CD4-positive, alpha-beta T cell (primary cell): ENCODE measurements at regions of chr4 and their contacts with region 1.

Region 1: GRCh38 chr4:54683616-54684346 is 26.0 kb downstream of the KIT start:
- DNase-seq: peak; percentile 19 to 72 (median 47)
- ATAC-seq: peak; percentile 76
- H3K4me3 ChIP-seq: no peak overlapping the region
- H3K4me3 Mint-ChIP-seq: peak overlapping the region; percentile 69
- H3K27ac ChIP-seq: no peak overlapping the region
- H3K27ac Mint-ChIP-seq: peak overlapping the region; percentile 45
- H3K4me1 ChIP-seq: peaks cover 20% of the 10 kb centered on the region
- H3K4me1 Mint-ChIP-seq: peaks cover 29% of the 10 kb centered on the region
- H3K27me3 ChIP-seq: no peaks in the 10 kb centered on the region
- H3K27me3 Mint-ChIP-seq: no peaks in the 10 kb centered on the region
- CTCF ChIP-seq: peak; percentile 58

Region 2: DNA sequence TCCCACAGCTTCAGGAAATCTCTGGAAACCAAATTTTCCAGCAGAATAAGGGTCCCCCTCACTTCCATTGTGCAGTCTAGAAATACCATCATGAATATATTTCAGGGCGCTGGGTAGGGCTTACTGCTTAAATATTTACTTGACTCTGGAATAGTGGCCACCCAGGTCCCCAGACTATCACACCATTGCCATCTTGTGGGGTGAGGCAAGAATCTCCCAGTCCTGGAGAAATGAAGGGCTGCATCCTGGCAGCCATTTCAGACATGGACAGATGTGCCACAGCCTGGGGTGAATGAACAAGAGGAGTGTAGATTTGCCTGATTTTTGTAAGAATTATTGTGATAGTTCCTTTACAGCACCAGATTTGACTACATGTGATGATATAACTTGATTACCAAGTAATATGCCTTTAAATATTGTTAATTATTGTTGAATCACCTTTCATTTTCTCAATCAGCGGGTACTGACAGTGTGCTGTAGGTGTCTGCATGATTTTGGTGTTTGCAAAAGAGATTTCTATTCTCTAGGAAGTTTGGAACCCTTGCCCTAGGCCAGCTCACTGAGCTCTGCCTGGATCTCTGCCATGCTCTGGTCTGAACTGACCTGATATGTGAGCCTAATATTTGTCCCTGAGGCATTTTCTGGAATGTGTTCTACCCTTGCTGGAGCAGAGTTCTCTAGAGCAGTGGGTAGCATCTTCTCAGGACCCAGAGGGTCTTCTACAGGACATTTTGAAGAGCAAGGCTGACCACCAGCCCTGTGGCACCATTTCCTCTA is 157.4 kb after region 1 on chr4:
- CTCF ChIA-PET with region 1: no interaction called
- POLR2A ChIA-PET with region 1: no interaction called
- intact Hi-C with region 1: loop called in 1 of 2 experiments (anchors 10 kb)
- DNase-seq: peak in 2 of 14 experiments; percentile 6 to 12
- ATAC-seq: no peak
- H3K4me3 ChIP-seq: no peak overlapping the region
- H3K4me3 Mint-ChIP-seq: no peak overlapping the region
- H3K27ac ChIP-seq: no peak overlapping the region
- H3K27ac Mint-ChIP-seq: no peak overlapping the region
- H3K4me1 ChIP-seq: no peaks in the 10 kb centered on the region
- H3K4me1 Mint-ChIP-seq: no peaks in the 10 kb centered on the region
- H3K27me3 ChIP-seq: no peaks in the 10 kb centered on the region
- H3K27me3 Mint-ChIP-seq: no peaks in the 10 kb centered on the region
- CTCF ChIP-seq: no peak

Region 3: DNA sequence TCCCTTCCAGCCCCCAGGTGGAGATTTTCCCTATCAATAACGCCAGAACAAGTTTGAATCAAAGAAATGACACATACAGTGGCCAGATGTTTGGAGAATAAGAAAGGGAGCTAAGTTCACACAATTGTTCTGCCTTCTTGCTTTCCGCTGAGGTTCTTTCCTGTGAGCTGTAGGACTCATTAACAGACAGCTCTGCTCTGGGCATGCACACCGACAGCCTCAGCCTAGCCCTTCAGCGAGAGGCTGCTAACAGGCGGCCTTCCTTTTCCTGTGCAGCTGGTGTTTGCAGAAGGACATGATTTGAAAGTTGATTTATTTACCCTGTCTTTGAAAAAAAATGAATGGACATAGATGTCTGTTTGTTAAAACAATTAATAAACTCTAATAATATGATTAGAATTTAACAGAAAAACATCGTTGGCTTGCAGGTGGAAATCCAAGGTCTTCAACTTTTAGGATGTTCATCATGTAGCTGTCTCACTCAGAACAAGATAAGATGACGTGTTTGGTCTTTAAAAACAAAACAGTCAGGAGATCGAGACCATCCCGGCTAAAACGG is 258.3 kb after region 1 on chr4:
- CTCF ChIA-PET with region 1: no interaction called
- POLR2A ChIA-PET with region 1: no interaction called
- intact Hi-C with region 1: loop called (anchors 5 kb)
- DNase-seq: peak; percentile 28 to 71 (median 48)
- ATAC-seq: peak; percentile 65
- H3K4me3 ChIP-seq: peak overlapping the region; percentile 35
- H3K4me3 Mint-ChIP-seq: peak overlapping the region; percentile 72
- H3K27ac ChIP-seq: peak overlapping the region; percentile 49 to 71
- H3K27ac Mint-ChIP-seq: peak overlapping the region; percentile 97
- H3K4me1 ChIP-seq: peaks cover 28% of the 10 kb centered on the region
- H3K4me1 Mint-ChIP-seq: peaks cover 72% of the 10 kb centered on the region
- H3K27me3 ChIP-seq: no peaks in the 10 kb centered on the region
- H3K27me3 Mint-ChIP-seq: no peaks in the 10 kb centered on the region
- CTCF ChIP-seq: no peak